Activated CD4-positive, alpha-beta memory T cell treated with anti-CD3 and anti-CD28 coated beads, Interleukin-2, amount 10 ng/mL, durations not matched to agents 7 days and 5 days (primary cell): ENCODE measurements at regions of chr2 and their contacts with region 1.

Region 1: DNA sequence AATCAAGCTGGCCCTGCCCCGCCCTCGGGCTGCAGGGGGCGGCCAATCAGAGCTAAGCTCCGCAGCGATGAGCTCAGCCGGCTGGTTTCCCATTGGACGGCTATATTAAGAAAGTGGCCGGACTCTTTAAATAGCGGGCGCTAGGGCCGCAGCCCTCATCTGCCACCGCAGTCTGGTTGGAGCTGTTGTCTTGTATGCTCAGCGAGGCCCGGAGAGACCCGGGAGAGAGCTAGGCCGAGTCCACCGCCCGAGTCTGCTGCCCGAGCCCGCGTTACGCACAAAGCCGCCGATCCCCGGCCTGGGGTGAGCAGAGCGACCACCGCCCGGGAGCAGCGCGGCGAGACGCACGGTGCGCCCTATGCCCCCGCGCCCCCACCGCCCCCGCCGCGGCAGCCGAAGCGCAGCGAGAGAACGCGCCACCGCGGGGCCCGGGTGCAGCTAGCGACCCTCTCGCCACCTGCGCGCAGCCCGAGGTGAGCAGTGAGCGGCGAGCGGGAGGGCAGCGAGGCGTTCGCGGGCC is at the start of gene RHOB:
- DNase-seq: peak; percentile 93
- H3K4me3 Mint-ChIP-seq: peak within 1 kb of the TSS; percentile 74
- H3K27ac Mint-ChIP-seq: no peak within 1 kb of the TSS
- H3K4me1 Mint-ChIP-seq: peaks cover 10% of the 10 kb centered on the region
- H3K27me3 Mint-ChIP-seq: peaks cover 41% of the 10 kb centered on the region
- total RNA-seq, gene RHOB: 14.0 to 14.4 TPM

Region 2: GRCh38 chr2:20304411-20304810 is 142.6 kb before region 1 on chr2:
- CTCF ChIA-PET with region 1: no interaction called
- POLR2A ChIA-PET with region 1: no interaction called
- DNase-seq: no peak
- H3K4me3 Mint-ChIP-seq: no peak overlapping the region
- H3K27ac Mint-ChIP-seq: no peak overlapping the region
- H3K4me1 Mint-ChIP-seq: no peaks in the 10 kb centered on the region
- H3K27me3 Mint-ChIP-seq: no peaks in the 10 kb centered on the region

Region 3: DNA sequence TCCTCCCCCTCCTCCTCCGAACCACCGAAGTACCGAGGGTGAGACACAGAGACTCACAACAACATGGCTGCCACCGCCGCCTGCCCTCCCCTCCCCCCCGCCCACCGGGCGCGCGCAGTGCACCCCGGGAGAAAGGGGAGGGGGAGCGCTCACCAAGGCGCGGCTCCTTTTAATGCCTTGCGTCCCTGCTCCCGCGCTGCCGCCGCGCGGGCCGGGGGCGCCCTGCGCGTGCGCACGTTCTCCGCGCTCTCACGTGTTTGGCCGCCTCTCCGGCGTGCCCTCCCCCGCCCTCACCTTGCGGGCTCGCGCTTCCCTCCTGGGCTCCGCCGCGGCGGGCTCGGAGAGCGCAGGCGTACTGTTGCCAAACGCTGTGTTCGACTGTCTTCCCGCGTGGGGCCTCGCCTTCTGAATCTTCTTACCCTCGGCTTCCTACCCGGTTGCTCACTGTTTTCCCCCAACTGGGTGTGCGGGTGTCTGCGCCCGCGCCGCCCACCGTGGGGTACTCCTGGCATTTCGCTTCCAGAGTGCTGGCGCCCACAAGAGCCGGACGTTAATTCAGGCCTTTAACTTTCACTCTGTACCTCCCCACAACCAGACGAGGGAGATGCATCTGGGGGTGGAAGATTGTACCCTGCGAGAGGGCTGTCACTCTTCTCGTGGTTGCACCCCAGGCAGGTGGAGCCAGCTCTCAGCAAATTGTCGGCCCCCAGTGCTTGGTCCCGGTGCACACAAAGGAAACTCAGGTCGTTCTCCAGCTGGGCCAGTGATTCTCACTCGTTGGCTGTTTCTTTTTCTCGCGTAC is 96.0 kb before region 1 on chr2 and contains the start of gene PUM2:
- CTCF ChIA-PET with region 1: interaction called, 4 read pairs
- POLR2A ChIA-PET with region 1: interaction called, 10 read pairs
- DNase-seq: peak; percentile 97
- H3K4me3 Mint-ChIP-seq: no peak within 1 kb of the TSS
- H3K27ac Mint-ChIP-seq: peak within 1 kb of the TSS; percentile 80
- H3K4me1 Mint-ChIP-seq: peaks cover 38% of the 10 kb centered on the region
- H3K27me3 Mint-ChIP-seq: no peaks in the 10 kb centered on the region
- total RNA-seq, gene PUM2: 141 to 147 TPM

Region 4: GRCh38 chr2:20430461-20431300 is 16.3 kb before region 1 on chr2:
- CTCF ChIA-PET with region 1: interaction called, 10 read pairs
- POLR2A ChIA-PET with region 1: interaction called, 7 read pairs
- DNase-seq: peak; percentile 23
- H3K4me3 Mint-ChIP-seq: no peak overlapping the region
- H3K27ac Mint-ChIP-seq: no peak overlapping the region
- H3K4me1 Mint-ChIP-seq: peaks cover 34% of the 10 kb centered on the region
- H3K27me3 Mint-ChIP-seq: peaks cover 12% of the 10 kb centered on the region

Region 5: GRCh38 chr2:20516646-20517341 is 69.8 kb after region 1 on chr2:
- CTCF ChIA-PET with region 1: no interaction called
- POLR2A ChIA-PET with region 1: no interaction called
- DNase-seq: no peak
- H3K4me3 Mint-ChIP-seq: no peak overlapping the region
- H3K27ac Mint-ChIP-seq: peak overlapping the region; percentile 2
- H3K4me1 Mint-ChIP-seq: peaks cover 17% of the 10 kb centered on the region
- H3K27me3 Mint-ChIP-seq: no peaks in the 10 kb centered on the region

Region 6: GRCh38 chr2:20635675-20636584 is 189.0 kb after region 1 on chr2:
- CTCF ChIA-PET with region 1: interaction called, 52 read pairs
- POLR2A ChIA-PET with region 1: interaction called, 5 read pairs
- DNase-seq: peak; percentile 53
- H3K4me3 Mint-ChIP-seq: no peak overlapping the region
- H3K27ac Mint-ChIP-seq: no peak overlapping the region
- H3K4me1 Mint-ChIP-seq: peaks cover 5% of the 10 kb centered on the region
- H3K27me3 Mint-ChIP-seq: no peaks in the 10 kb centered on the region

Region 7: DNA sequence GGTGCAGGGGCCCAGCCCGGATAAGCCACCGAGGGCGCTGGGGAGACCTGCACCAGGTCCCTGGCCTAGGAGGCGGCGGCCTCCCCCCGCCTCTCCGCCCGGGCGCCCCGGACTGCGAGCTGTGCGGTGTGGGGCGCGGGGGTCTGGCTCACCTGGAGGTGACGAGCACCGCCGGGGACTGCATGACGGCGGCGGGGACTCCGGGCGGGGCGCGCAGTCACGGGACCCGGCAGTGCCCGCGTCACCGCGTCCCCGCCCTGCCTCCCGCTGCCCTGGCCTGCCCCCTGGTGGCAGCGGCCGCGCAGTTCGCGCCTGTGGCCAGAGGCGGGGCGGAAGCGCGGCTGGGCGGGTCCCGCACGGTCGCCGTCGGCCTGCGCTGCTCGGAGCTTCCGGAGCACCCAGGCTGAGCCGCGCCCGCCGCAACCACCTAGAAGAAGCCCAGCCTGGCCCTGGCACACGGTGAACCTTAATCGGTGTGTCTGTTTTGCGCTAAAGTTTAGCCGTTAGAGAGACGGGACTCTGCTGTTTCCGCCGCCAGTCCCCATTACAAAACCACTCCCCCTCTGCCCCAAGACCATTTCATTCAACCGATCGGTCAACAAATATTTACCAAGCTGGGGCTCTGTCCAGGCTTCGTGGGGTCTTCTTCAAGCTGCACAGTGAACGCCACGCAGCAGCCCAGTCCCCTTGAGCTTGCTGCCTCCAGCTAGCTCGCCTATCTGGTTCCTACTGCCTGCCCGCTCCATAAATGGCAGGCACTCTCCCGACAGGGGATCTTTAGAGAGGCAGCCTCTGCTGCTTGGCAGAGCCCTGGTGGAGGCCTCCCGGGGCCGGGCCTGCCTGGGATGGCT is 204.1 kb after region 1 on chr2 and contains the start of gene HS1BP3:
- CTCF ChIA-PET with region 1: interaction called, 41 read pairs
- POLR2A ChIA-PET with region 1: interaction called, 25 read pairs
- DNase-seq: peak; percentile 92
- H3K4me3 Mint-ChIP-seq: peak within 1 kb of the TSS; percentile 91
- H3K27ac Mint-ChIP-seq: peak within 1 kb of the TSS; percentile 89
- H3K4me1 Mint-ChIP-seq: peaks cover 30% of the 10 kb centered on the region
- H3K27me3 Mint-ChIP-seq: peaks cover 12% of the 10 kb centered on the region
- total RNA-seq, gene HS1BP3: 17.2 to 19.4 TPM